ENCODE measurements at regions of chrX and their contacts with region 1.

Region 1: DNA sequence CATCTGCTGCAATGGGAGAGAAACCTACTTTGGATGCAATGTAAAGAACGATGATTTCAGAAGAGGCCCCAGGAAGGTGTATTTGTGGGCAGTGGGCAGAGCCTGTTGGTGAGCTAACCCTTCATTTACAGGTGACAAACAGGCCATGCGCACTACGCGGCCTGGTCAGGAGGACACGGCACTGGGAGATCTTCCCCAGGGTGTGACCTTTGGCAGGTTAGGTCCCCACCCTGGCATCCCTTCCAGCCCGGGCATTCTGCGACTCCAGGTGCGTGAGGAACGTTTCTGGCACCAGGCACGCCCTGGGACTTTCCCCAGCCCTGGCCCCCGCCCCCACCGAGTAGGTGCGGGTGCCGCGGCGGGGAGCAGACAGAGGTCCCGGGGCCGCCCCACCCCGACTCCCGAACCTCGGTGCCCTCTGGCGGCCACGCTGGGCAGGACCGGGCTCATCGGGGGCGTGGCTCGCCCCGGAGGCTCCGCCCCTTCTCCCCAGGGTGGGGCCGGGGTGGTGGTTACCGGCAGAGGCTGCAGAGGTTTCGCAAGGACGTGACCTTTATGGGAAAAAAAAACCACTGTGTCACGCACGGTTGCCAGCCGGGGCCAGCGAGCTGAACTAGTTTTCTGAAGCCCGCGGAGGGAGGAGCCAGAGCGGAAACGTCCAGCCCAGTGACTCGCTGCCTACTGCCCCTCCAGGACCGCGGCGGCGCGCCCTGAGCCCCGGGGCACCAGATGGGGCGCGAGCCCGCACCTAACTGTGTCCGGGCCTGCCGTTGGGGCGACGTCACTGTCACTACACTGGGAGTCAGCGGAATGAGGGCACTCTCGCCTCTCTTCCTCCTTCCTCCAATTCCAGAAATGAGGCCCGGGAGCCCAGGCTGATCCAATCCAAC is 5.0 kb upstream of the NYX start:
- DNase-seq: peak; percentile 91
- H3K4me3 ChIP-seq: peak overlapping the region; percentile 11 to 41 (median 39)
- H3K27ac ChIP-seq: peak overlapping the region; percentile 59 to 63 (median 61)
- H3K4me1 ChIP-seq: peaks cover 0 to 9% (median 0%) of the 10 kb centered on the region in 4 donors
- H3K27me3 ChIP-seq: no peaks in the 10 kb centered on the region
- CTCF ChIP-seq: peak; percentile 19 to 52 (median 42)
- EP300 ChIP-seq: peak in 2 of 4 donors; percentile 17 to 35
- POLR2A ChIP-seq: no peak

Region 2: GRCh38 chrX:40700640-40701342 is 741.4 kb before region 1 on chrX:
- intact Hi-C with region 1: no loop called
- DNase-seq: no peak
- H3K4me3 ChIP-seq: no peak overlapping the region
- H3K27ac ChIP-seq: no peak overlapping the region
- H3K4me1 ChIP-seq: no peaks in the 10 kb centered on the region
- H3K27me3 ChIP-seq: no peaks in the 10 kb centered on the region
- CTCF ChIP-seq: no peak
- EP300 ChIP-seq: no peak
- POLR2A ChIP-seq: no peak

Region 3: GRCh38 chrX:41198406-41198805 is 243.8 kb before region 1 on chrX:
- intact Hi-C with region 1: no loop called
- DNase-seq: no peak
- H3K4me3 ChIP-seq: no peak overlapping the region
- H3K27ac ChIP-seq: no peak overlapping the region
- H3K4me1 ChIP-seq: no peaks in the 10 kb centered on the region
- H3K27me3 ChIP-seq: no peaks in the 10 kb centered on the region
- CTCF ChIP-seq: no peak
- EP300 ChIP-seq: no peak
- POLR2A ChIP-seq: no peak

Region 4: DNA sequence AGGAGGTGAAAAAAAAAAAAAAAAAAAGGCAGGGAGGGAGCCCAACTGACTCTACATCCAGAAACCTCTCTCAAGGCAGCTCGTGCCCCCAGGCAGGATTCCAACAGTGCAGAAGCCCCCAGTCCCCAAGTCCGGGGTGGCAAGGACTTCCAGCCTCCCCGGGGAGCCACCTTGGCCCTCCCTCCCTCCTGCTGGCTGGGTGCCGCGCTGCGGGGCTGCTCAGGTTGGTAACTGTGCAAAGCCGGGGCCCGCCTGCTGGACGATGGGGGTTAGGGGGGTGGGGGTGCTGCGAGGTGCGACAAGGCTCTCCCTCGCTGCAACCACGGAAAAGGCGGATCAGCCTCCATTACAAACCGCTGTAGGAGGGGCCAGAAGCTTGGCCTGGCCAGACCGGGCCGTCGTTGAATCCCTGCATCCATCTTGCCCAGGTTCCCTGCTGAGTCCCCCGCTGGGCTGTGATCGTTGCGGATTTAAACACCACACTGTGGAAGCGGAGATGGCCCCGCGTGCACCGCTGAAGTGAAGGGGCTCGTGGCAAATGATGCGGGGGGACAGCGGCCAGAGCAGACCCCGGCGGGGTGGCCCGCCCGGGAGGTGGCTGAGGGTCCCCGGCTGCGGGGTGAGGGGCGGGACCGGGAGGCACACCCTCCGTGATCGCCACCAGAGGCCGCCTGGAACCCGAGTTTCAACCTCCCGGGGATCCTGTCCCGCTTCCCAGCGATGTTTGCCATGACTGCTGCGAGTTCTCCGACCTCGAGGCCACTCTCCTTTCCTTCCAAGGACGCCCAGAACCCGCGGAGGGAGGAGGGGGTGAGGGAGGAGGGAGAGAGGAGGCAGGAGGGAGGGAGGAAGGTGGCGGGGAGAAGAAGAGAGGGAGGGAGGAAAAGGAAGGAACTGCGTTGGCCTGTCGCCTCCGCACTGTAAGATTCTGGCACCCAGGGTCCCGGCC is 166.2 kb before region 1 on chrX:
- intact Hi-C with region 1: loop called (anchors 10 kb)
- DNase-seq: peak; percentile 86
- H3K4me3 ChIP-seq: peak overlapping the region; percentile 33 to 54 (median 51)
- H3K27ac ChIP-seq: peak overlapping the region; percentile 63 to 83 (median 70)
- H3K4me1 ChIP-seq: peaks cover 0 to 20% (median 7%) of the 10 kb centered on the region in 4 donors
- H3K27me3 ChIP-seq: no peaks in the 10 kb centered on the region
- CTCF ChIP-seq: peak in 2 of 4 experiments; percentile 23 to 30
- EP300 ChIP-seq: no peak
- POLR2A ChIP-seq: no peak